ENCODE measurements at regions of chr9 and their contacts with region 1.

Region 1: DNA sequence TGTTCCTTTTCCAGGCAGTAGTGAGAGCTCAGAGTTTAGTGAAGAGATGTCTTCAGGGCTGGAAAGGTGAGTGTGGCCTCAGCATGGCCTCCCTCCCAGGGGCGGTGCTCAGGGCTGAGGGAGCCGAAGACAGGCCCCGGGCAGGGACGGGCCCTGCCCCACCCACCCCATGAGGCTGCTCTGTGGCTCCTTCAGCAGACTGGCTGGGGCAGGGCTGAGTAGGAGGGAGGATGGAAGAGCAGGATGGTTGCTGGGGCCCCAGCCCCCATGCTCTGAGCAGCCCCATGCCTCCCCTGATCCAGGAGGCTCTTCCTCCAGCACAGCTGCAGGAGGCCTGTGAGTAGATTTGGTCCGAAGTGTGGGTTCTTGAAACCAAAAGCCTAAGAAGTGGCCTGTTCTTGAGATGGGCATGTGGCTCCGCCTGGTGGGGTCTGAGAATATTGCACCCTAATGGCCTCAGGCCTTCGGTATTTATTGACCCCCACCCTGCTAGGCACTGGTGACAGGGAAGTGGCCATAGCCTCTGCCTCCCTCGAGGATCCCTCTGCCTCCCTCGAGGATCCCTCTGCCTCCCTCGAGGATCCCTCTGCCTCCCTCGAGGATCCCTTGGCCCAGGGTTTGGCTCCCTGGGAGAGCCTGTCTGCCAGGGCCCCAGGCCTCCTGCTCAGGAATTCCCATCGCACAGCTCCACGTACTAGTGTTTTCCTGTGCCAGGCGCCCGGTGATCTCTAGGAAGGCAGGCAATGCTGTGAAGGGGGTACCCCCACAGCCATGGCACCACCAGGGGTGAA is 65.4 kb upstream of the GARNL3 start:
- DNase-seq: peak; percentile 73 to 80 (median 77)
- ATAC-seq: peak; percentile 17 to 67 (median 64)
- H3K4me3 ChIP-seq: no peak overlapping the region
- H3K27ac ChIP-seq: peak overlapping the region in 11 of 12 donors; percentile 43 to 81 (median 72)
- H3K4me1 ChIP-seq: peaks cover 4 to 37% (median 28%) of the 10 kb centered on the region in 12 donors
- H3K27me3 ChIP-seq: no peaks in the 10 kb centered on the region
- CTCF ChIP-seq: peak; percentile 80 to 94 (median 91)
- POLR2A ChIP-seq: no peak

Region 2: GRCh38 chr9:126939821-126940221 is 259.4 kb before region 1 on chr9:
- intact Hi-C with region 1: loop called (anchors 1 to 2 kb)
- DNase-seq: no peak
- ATAC-seq: no peak
- H3K4me3 ChIP-seq: no peak overlapping the region
- H3K27ac ChIP-seq: no peak overlapping the region
- H3K4me1 ChIP-seq: peaks cover 0 to 55% (median 21%) of the 10 kb centered on the region in 12 donors
- H3K27me3 ChIP-seq: no peaks in the 10 kb centered on the region
- CTCF ChIP-seq: no peak
- POLR2A ChIP-seq: no peak

Region 3: GRCh38 chr9:126965541-126966428 is 233.4 kb before region 1 on chr9:
- intact Hi-C with region 1: loop called in 9 of 10 experiments (anchors 1 to 10 kb)
- DNase-seq: peak in 4 of 5 donors; percentile 43 to 60 (median 47)
- ATAC-seq: peak; percentile 74 to 89 (median 82)
- H3K4me3 ChIP-seq: no peak overlapping the region
- H3K27ac ChIP-seq: peak overlapping the region in 10 of 12 donors; percentile 13 to 86 (median 62)
- H3K4me1 ChIP-seq: peaks cover 0 to 32% (median 12%) of the 10 kb centered on the region in 12 donors
- H3K27me3 ChIP-seq: no peaks in the 10 kb centered on the region
- CTCF ChIP-seq: peak; percentile 67 to 88 (median 79)
- POLR2A ChIP-seq: no peak

Region 4: GRCh38 chr9:127021664-127022363 is 177.4 kb before region 1 on chr9:
- intact Hi-C with region 1: loop called in 1 of 10 experiments (anchors 10 kb)
- DNase-seq: peak; percentile 89 to 94 (median 91)
- ATAC-seq: peak; percentile 98 to 99 (median 98)
- H3K4me3 ChIP-seq: no peak overlapping the region
- H3K27ac ChIP-seq: peak overlapping the region in 11 of 12 donors; percentile 62 to 91 (median 82)
- H3K4me1 ChIP-seq: peaks cover 4 to 41% (median 22%) of the 10 kb centered on the region in 12 donors
- H3K27me3 ChIP-seq: no peaks in the 10 kb centered on the region
- CTCF ChIP-seq: no peak
- POLR2A ChIP-seq: no peak

Region 5: DNA sequence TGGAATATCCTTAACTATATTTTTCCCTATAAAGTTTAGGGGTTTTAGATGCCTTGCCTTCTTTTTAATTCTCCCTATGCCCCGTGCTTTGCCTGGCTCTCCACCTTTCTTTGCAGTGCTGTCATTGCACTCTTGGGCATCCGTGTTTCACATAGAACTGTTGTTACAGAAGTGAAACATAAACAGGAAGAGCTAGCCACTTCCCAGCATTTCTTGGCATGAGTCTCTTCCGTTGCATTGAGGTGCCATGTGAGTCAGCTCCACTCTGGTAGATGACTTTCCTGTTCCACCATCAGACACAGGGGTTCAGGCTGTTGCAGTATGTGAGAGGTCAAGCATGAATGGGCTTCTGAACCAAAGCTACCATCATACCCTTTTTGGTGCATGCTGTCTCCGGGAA is 150.2 kb before region 1 on chr9:
- intact Hi-C with region 1: loop called in 1 of 10 experiments (anchors 10 kb)
- DNase-seq: peak in 2 of 5 donors; percentile 45 to 52
- ATAC-seq: peak in 3 of 4 donors; percentile 68 to 86 (median 81)
- H3K4me3 ChIP-seq: peak overlapping the region in 2 of 12 donors; percentile 20 to 37
- H3K27ac ChIP-seq: peak overlapping the region in 9 of 12 donors; percentile 7 to 82 (median 41)
- H3K4me1 ChIP-seq: peaks cover 0 to 53% (median 31%) of the 10 kb centered on the region in 12 donors
- H3K27me3 ChIP-seq: no peaks in the 10 kb centered on the region
- CTCF ChIP-seq: peak in 9 of 12 donors; percentile 8 to 54 (median 33)
- POLR2A ChIP-seq: no peak

Region 6: DNA sequence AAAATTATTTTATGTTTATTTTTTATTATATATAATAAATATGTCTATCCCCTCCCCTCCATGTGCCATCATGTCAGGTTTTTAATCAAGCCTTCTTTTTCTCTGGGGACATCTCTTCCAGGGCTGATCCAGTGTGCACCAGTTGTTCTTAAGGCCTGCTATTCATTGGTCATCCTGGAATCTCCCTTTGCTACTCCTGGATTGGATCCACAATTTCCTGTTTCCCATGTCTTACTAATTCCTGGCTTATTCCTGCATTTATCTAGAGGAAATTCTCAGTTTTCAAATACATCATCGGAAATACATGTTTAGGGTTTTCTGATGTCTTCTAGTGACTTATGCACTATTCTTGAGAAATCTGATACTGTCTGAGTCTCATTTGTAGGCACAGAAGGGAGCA is 133.6 kb before region 1 on chr9:
- intact Hi-C with region 1: no loop called
- DNase-seq: no peak
- ATAC-seq: peak in 2 of 4 donors; percentile 45 to 68
- H3K4me3 ChIP-seq: no peak overlapping the region
- H3K27ac ChIP-seq: peak overlapping the region in 4 of 12 donors; percentile 14 to 69 (median 20)
- H3K4me1 ChIP-seq: peaks cover 0 to 22% (median 4%) of the 10 kb centered on the region in 12 donors
- H3K27me3 ChIP-seq: no peaks in the 10 kb centered on the region
- CTCF ChIP-seq: no peak
- POLR2A ChIP-seq: no peak

Region 7: DNA sequence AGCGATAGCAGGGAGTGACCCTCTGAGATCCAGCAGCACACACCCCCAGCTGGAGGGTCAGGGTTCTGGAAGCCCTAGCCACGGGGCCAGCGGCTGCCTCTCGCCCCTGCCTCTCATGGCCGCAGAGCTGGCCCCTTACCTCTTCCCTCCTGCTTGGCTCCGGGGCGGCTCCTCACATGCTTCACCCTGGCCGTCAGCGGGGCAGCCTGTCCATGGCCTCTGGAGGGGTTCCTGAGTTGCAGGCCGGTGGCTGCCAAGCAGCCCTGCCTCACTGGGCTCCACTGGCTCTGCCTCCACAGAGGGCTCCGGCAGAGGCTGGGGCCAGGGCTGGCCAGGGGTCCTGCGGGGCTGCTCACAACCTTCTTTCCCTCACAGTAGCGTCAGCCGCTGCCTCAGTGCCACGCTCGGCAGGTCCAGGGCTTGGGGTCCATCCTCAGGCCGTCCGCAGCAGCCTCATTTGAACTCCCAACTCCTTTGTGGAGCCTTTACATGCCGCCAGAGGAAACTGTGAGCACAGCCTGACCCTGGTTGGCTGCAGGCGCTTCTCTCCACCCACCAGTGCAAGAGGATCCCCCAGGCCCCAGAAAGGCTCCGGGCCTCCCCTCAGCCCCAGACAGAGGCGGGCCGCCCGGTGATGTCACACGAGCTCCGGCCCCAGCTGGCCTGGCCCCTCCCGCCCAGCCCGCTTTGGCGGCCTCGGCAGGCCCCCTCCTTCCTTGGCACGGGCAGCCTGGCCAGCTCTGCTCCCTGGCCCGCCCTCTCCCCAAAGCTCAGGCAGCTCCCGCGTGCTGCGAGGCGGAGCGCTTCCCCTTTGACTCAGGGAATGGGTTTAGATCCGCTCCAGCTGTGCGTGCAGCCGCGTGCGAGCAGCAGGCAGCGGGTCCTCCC is 76.8 kb before region 1 on chr9 and contains the start of gene ANGPTL2:
- intact Hi-C with region 1: loop called in 2 of 10 experiments (anchors 2 to 5 kb)
- DNase-seq: peak; percentile 94 to 96 (median 95)
- ATAC-seq: peak; percentile 87 to 95 (median 94)
- H3K4me3 ChIP-seq: peak within 1 kb of the TSS; percentile 40 to 92 (median 72)
- H3K27ac ChIP-seq: peak within 1 kb of the TSS; percentile 20 to 95 (median 91)
- H3K4me1 ChIP-seq: peaks cover 4 to 61% (median 49%) of the 10 kb centered on the region in 12 donors
- H3K27me3 ChIP-seq: peaks cover 0 to 12% (median 0%) of the 10 kb centered on the region in 9 donors
- CTCF ChIP-seq: peak in 2 of 12 donors; percentile 6 to 29
- POLR2A ChIP-seq: peak in 1 of 2 donors; percentile 88
- total RNA-seq, gene ANGPTL2: 25.6 to 92.5 (median 47.4) TPM

Region 8: GRCh38 chr9:127136081-127136879 is 62.9 kb before region 1 on chr9:
- intact Hi-C with region 1: loop called in 1 of 10 experiments (anchors 5 kb)
- DNase-seq: no peak
- ATAC-seq: no peak
- H3K4me3 ChIP-seq: no peak overlapping the region
- H3K27ac ChIP-seq: peak overlapping the region in 1 of 12 donors; percentile 96
- H3K4me1 ChIP-seq: peaks cover 0 to 64% (median 38%) of the 10 kb centered on the region in 12 donors
- H3K27me3 ChIP-seq: no peaks in the 10 kb centered on the region
- CTCF ChIP-seq: no peak
- POLR2A ChIP-seq: no peak

Region 9: DNA sequence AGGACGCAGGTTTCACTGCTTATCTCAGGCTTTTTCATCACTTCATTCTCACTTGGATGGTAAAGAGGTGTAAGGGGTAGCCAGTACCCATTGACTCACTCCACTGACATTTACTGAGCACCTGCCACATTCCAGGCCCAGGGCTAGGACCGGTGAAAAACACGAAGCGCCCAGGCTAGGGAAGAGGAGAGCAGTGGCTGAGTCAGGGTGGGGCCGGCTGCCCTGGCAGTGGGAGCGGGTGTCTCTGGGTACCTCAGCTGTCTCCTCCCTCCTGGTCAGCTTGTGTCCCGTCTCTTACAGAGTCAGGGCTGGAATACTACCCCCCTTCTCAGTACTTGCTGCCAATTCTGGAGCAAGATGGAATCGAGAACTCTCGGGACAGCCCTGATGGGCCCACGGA is 274.3 kb after region 1 on chr9:
- intact Hi-C with region 1: no loop called
- DNase-seq: no peak
- ATAC-seq: peak; percentile 37 to 73 (median 53)
- H3K4me3 ChIP-seq: no peak overlapping the region
- H3K27ac ChIP-seq: peak overlapping the region in 3 of 12 donors; percentile 52 to 61 (median 57)
- H3K4me1 ChIP-seq: peaks cover 0 to 12% (median 0%) of the 10 kb centered on the region in 12 donors
- H3K27me3 ChIP-seq: no peaks in the 10 kb centered on the region
- CTCF ChIP-seq: no peak
- POLR2A ChIP-seq: no peak